Activated CD8-positive, alpha-beta T cell treated with anti-CD3 and anti-CD28 coated beads for 36 hours (primary cell): ENCODE measurements at regions of chr9 and their contacts with region 1.

Region 1: GRCh38 chr9:120842690-120843499 is at the start of gene PSMD5:
- DNase-seq: peak; percentile 100
- ATAC-seq: peak; percentile 90
- H3K4me3 Mint-ChIP-seq: peak within 1 kb of the TSS; percentile 98
- H3K27ac Mint-ChIP-seq: peak within 1 kb of the TSS; percentile 95
- H3K4me1 Mint-ChIP-seq: peaks cover 71% of the 10 kb centered on the region
- H3K27me3 Mint-ChIP-seq: no peaks in the 10 kb centered on the region
- CTCF ChIP-seq: no peak
- total RNA-seq, gene PSMD5: 52.3 to 55.3 TPM

Region 2: DNA sequence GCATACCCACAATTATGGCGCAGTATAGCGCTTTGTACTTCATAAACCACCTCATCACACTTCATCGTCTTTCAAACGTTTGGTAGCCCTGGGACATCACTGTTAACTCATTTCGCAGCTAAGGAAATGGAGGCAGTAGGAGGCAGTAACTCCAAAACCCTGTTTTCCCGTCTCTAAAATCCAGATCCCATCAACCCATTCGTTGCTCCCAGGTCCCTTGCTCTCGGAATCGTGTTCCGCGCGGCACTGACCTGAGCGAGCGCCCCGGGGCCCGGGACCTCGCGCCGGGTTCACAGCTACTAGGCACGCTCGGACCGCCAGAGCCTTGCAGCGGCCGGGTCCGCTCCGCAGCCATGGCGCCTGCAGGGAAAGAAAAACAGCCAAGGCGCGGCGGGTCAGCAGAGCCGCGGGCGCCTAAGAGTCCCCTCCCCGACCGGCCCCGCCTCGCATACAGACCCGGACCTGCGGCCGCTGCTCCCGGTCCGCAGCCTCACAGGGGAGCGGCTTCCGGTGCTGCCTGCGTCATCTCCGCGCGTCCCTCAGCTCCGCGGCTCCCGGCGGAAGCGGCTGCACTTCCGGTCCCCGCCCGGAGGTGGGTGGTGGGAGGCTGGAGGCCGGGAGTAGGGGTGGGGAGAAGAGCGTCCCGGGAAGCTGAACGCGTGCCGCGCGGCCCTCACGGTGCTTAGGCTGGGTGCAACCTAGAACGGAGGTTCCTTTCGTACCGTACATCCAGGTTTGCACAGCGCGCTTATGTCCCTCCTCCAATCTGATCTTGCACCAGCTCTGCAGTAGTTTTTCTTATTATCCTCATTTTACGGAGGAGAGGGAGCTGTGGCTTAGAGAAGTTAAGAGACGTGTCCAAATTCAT is 49.8 kb before region 1 on chr9 and contains the start of gene FBXW2:
- CTCF ChIA-PET with region 1: no interaction called
- POLR2A ChIA-PET with region 1: interaction called, 20 read pairs
- intact Hi-C with region 1: no loop called
- DNase-seq: peak; percentile 91
- ATAC-seq: peak; percentile 94
- H3K4me3 Mint-ChIP-seq: peak within 1 kb of the TSS; percentile 99
- H3K27ac Mint-ChIP-seq: peak within 1 kb of the TSS; percentile 97
- H3K4me1 Mint-ChIP-seq: peaks cover 46% of the 10 kb centered on the region
- H3K27me3 Mint-ChIP-seq: no peaks in the 10 kb centered on the region
- CTCF ChIP-seq: no peak
- total RNA-seq, gene FBXW2: 68.8 to 68.9 TPM

Region 3: DNA sequence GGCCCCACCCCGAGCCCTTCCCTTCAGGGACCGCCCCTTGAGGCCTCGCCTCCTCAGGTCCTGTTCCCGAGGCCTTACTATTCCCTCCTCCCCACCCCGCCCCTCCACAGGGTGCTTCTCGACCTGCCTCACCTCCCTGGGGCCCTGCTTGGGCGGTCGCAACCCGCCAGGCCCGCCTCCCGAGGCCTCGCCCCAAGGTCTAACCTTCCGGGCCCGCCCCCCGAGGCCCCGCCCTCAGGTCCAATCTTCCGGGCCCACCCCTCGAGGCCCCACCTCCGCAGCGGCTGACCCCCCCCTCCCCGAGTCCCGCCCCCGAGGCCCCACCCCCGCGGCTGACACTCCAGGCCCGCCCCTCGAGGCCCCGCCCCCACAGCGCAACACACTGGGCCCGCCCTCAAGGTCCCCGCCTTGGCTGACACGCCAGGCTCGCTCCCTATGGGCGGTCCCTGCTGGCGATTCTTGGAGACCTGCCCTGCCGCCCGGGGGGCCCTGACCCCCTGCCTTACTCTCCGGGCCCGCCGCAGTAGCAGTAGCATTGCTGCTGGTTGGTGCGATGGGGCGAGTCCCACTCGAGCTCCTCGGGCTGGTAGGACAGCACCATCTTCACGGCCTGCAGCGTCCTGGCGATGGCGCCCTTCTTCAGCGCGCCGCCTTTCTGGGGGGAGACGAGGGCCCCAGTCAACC is 25.9 kb after region 1 on chr9:
- CTCF ChIA-PET with region 1: interaction called, 6 read pairs
- POLR2A ChIA-PET with region 1: interaction called, 231 read pairs
- intact Hi-C with region 1: no loop called
- DNase-seq: peak; percentile 98
- ATAC-seq: peak; percentile 91
- H3K4me3 Mint-ChIP-seq: peak overlapping the region; percentile 81
- H3K27ac Mint-ChIP-seq: peak overlapping the region; percentile 97
- H3K4me1 Mint-ChIP-seq: peaks cover 47% of the 10 kb centered on the region
- H3K27me3 Mint-ChIP-seq: no peaks in the 10 kb centered on the region
- CTCF ChIP-seq: peak; percentile 51

Region 4: GRCh38 chr9:120875954-120876841 is 33.3 kb after region 1 on chr9:
- CTCF ChIA-PET with region 1: no interaction called
- POLR2A ChIA-PET with region 1: interaction called, 231 read pairs
- intact Hi-C with region 1: no loop called
- DNase-seq: peak; percentile 96
- ATAC-seq: peak; percentile 62
- H3K4me3 Mint-ChIP-seq: peak overlapping the region; percentile 91
- H3K27ac Mint-ChIP-seq: peak overlapping the region; percentile 93
- H3K4me1 Mint-ChIP-seq: peaks cover 75% of the 10 kb centered on the region
- H3K27me3 Mint-ChIP-seq: no peaks in the 10 kb centered on the region
- CTCF ChIP-seq: no peak

Region 5: GRCh38 chr9:120892748-120893610 is 50.1 kb after region 1 on chr9:
- CTCF ChIA-PET with region 1: no interaction called
- POLR2A ChIA-PET with region 1: interaction called, 31 read pairs
- intact Hi-C with region 1: loop called (anchors 10 kb)
- DNase-seq: peak; percentile 83
- ATAC-seq: peak; percentile 38
- H3K4me3 Mint-ChIP-seq: peak overlapping the region; percentile 79
- H3K27ac Mint-ChIP-seq: peak overlapping the region; percentile 98
- H3K4me1 Mint-ChIP-seq: peaks cover 84% of the 10 kb centered on the region
- H3K27me3 Mint-ChIP-seq: no peaks in the 10 kb centered on the region
- CTCF ChIP-seq: no peak